ENCODE measurements at regions of chr7 and their contacts with region 1.

Region 1: DNA sequence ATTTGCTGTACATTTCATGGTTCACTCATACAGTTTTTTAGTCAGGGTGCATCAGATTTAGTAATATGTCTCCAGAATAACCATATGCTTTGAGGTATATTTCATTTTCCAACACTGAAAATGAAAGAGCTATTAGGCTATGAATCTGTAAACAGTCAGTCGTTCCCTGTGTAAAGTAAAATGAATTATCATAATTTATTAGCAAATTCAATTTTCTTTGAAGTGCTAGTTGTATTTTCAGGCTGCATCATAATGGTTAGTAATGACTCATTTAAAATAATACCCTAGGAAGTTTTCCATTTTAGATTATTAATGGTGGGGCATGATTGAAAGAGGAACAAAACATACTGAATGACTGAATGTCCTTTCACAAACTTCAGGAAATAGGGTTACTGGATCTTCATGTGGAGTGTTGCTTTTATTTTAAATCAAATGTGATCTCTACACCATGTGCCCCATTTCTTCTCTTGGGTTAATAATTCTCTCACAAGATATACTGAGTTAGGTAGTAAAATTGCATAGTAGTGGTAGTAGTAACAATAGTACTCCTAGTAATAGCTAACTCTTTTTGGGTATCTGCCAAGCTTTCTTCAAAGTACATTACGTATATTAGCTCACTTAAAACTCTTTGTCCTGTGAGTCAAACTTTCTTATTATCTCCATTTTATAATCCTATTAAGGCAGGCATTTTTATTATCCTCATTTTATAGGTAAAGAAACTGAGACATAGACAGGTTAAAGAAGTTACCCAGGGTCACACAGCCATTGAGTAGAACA is 476.5 kb downstream of the SUGCT start:
- DNase-seq: no peak
- H3K4me3 ChIP-seq: no peak overlapping the region
- H3K27ac ChIP-seq: no peak overlapping the region
- H3K4me1 ChIP-seq: no peaks in the 10 kb centered on the region
- H3K27me3 ChIP-seq: no peaks in the 10 kb centered on the region
- CTCF ChIP-seq: no peak
- POLR2A ChIP-seq: no peak

Region 2: GRCh38 chr7:41870461-41871138 is 1259.3 kb after region 1 on chr7:
- intact Hi-C with region 1: no loop called
- DNase-seq: no peak
- H3K4me3 ChIP-seq: no peak overlapping the region
- H3K27ac ChIP-seq: no peak overlapping the region
- H3K4me1 ChIP-seq: peaks cover 7% of the 10 kb centered on the region
- H3K27me3 ChIP-seq: no peaks in the 10 kb centered on the region
- CTCF ChIP-seq: no peak
- POLR2A ChIP-seq: no peak

Region 3: DNA sequence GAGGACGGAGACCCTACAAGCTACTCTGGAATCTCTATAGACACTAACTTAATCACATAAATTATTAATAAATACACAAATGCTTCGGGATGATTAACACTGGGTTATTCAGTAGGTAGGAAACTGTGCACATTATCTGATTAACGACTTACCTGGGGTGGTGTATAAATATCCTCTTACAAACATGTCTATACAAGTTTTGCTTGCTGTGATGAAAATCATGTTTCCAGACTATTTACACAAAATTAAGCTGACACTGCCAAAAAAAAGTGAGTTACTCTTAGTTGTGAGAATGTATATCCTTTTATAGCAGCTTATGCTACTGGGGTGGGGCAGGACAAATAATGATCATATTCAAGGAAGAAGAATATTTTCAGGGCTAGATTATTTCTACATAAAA is 1986.0 kb after region 1 on chr7:
- intact Hi-C with region 1: loop called (anchors 5 kb)
- DNase-seq: no peak
- H3K4me3 ChIP-seq: no peak overlapping the region
- H3K27ac ChIP-seq: no peak overlapping the region
- H3K4me1 ChIP-seq: no peaks in the 10 kb centered on the region
- H3K27me3 ChIP-seq: no peaks in the 10 kb centered on the region
- CTCF ChIP-seq: no peak
- POLR2A ChIP-seq: no peak

Measured in vagina (tissue), 2 donors.